Activated naive CD4-positive, alpha-beta T cell treated with anti-CD3 and anti-CD28 coated beads, Interleukin-2, amount 10 ng/mL, durations not matched to agents 7 days and 5 days (primary cell): ENCODE measurements at regions of chr11 and their contacts with region 1.

Region 1: DNA sequence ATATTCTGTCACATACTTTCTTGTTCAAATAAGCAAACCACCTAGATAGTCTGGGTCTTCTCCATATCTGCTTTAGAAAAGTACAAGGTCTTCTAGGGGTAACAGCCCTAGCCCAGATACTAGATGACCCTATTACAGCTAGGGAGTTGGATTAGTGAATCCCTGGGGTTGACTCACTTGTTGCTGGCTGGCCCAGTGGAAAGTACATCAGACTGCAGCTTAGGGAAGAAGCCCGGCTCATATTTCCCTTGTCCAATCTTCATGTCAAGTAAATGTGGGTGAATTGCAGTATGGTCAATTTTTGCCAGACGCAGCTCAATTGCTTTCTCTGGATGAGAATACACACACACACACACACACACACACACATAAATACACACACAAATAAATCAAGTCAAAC is 79.1 kb upstream of the SCUBE2 start:
- DNase-seq: no peak
- H3K4me3 Mint-ChIP-seq: no peak overlapping the region
- H3K27ac Mint-ChIP-seq: no peak overlapping the region
- H3K4me1 Mint-ChIP-seq: peaks cover 10% of the 10 kb centered on the region
- H3K27me3 Mint-ChIP-seq: no peaks in the 10 kb centered on the region

Region 2: GRCh38 chr11:9219572-9219971 is 49.1 kb after region 1 on chr11:
- CTCF ChIA-PET with region 1: no interaction called
- DNase-seq: no peak
- H3K4me3 Mint-ChIP-seq: no peak overlapping the region
- H3K27ac Mint-ChIP-seq: no peak overlapping the region
- H3K4me1 Mint-ChIP-seq: peaks cover 22% of the 10 kb centered on the region
- H3K27me3 Mint-ChIP-seq: no peaks in the 10 kb centered on the region

Region 3: DNA sequence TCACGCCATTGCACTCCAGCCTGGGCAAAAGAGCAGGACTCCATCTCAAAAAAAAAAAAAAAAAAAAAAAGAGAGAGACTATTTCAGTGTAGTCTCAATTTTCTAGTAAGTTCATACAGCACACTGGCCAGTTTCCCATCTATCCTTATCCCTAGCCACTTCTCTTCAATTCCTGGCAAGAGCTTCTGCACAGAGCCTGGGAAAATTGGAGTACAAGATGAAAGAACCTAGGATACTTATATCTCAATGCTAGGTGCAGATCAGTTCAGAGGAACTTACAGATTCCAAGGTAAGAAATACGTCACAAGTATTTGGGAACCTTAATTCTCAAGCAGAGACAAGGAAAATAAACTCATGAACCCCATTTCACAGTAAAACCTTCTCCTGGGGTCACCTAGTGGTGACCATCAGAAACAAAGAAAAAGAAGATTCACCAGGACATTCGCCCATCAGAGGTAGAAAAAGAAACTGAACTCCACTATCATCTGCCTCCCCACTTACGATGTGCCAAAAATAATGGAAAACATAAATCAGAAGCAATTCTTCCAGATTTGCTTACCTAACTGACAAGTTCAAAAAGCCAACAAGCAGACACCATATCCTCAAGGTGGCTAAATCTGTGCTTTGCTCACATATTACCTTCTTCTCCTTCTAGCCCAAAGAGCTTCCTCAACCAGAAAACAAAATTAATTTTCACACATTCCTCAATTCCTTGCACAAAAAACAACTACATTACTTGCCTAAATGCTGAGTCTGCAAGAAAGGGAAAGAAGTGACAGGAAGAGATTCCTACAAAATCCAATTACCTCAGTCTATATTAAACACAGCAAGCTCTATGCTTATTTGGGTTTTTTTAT is 89.8 kb after region 1 on chr11:
- CTCF ChIA-PET with region 1: interaction called, 10 read pairs
- DNase-seq: no peak
- H3K4me3 Mint-ChIP-seq: no peak overlapping the region
- H3K27ac Mint-ChIP-seq: no peak overlapping the region
- H3K4me1 Mint-ChIP-seq: peaks cover 52% of the 10 kb centered on the region
- H3K27me3 Mint-ChIP-seq: peaks cover under 1% of the 10 kb centered on the region

Region 4: DNA sequence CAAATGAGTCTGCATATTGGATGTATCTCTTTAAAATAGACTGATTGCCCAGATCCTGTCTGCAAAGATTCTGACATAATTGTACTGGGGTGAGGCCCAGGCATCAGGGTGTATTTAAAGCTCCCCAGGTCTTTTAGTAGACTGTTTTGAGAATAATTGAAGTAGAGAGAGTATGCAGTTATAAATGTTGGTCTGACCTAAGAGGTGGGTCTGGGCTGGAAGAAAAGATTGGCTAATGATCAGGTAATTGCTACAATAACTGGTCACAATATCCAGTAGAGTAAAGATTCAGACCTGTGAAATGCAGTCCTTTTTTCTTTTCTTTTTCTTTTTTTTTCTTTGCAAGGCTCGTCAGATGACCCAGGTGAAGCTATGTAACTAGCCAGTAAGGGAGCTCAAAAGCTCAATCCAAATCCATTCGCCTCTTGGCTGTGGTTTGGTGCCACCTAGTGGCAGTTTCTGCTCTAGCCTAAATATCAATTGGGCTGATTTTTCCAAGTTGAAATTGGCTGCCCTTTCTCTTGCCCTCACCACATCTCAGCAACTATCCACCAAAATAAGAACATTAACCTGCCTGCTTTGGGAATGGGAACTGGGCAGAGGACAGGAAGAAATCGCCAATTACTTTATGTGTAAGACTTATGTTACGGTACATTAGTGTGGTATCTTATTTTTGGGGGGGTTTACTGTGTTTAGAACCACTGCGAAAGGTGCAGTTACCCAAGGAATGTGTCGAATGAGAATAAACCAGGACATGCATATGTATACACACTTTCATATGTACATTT is 336.2 kb after region 1 on chr11:
- CTCF ChIA-PET with region 1: interaction called, 31 read pairs
- DNase-seq: peak; percentile 84
- H3K4me3 Mint-ChIP-seq: no peak overlapping the region
- H3K27ac Mint-ChIP-seq: peak overlapping the region; percentile 52
- H3K4me1 Mint-ChIP-seq: peaks cover 11% of the 10 kb centered on the region
- H3K27me3 Mint-ChIP-seq: no peaks in the 10 kb centered on the region